MCF 10A (cell line): ENCODE measurements at regions of chr5 and their contacts with region 1.

Region 1: GRCh38 chr5:142769741-142770631 is at the start of gene ARHGAP26:
- DNase-seq: peak; percentile 99
- H3K4me3 Mint-ChIP-seq: peak within 1 kb of the TSS; percentile 95
- H3K27ac Mint-ChIP-seq: peak within 1 kb of the TSS; percentile 33
- H3K4me1 Mint-ChIP-seq: peaks cover 21% of the 10 kb centered on the region
- H3K27me3 Mint-ChIP-seq: no peaks in the 10 kb centered on the region
- CTCF ChIP-seq: peak; percentile 30
- total RNA-seq, gene ARHGAP26: 54.3 and 58.9 TPM in 2 replicates

Region 2: DNA sequence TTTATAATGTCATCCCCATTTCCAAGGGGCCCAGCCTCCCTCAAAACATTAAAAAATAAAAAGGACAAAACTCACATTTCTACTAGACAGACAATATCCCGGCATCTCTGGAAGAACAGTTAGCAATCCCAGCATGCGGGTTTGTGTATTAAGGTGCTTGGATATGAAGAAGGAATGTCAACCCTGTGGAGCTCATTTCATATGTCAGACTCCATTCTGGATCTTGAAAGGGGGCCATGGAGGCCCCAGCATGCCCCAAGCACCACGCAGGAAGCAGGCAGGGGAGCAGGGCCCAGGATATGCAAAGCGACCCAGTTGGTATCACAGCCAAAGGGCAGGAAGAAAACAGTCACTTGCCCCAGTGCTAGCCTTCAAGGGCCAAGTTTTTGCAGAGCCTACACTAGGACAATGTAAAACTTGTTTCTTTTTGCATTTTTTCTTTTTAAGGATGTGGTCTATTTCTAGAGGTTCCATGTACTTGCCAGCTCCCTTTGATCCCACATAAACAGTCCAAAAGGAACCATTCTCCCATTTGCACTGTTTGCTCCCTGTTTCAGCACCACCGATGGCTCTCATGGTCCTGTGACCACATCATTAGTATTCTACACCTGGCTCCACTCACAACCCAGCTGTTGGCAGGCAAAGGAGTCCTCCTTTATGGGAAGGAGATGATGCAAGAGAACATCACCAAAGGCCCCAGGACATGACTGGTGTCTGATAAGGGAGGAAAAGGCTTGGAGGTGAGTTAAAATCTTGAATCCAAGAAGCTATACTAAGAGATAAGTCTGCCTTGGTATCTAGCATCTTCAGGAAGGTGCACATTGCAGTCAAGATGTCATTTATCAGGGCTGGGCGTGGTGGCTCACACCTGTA is 142.4 kb before region 1 on chr5:
- CTCF ChIA-PET with region 1: no interaction called
- POLR2A ChIA-PET with region 1: no interaction called
- intact Hi-C with region 1: no loop called
- DNase-seq: peak; percentile 42
- H3K4me3 Mint-ChIP-seq: no peak overlapping the region
- H3K27ac Mint-ChIP-seq: no peak overlapping the region
- H3K4me1 Mint-ChIP-seq: no peaks in the 10 kb centered on the region
- H3K27me3 Mint-ChIP-seq: no peaks in the 10 kb centered on the region
- CTCF ChIP-seq: no peak

Region 3: GRCh38 chr5:142692321-142692894 is 77.6 kb before region 1 on chr5:
- CTCF ChIA-PET with region 1: no interaction called
- POLR2A ChIA-PET with region 1: no interaction called
- intact Hi-C with region 1: no loop called
- DNase-seq: no peak
- H3K4me3 Mint-ChIP-seq: no peak overlapping the region
- H3K27ac Mint-ChIP-seq: no peak overlapping the region
- H3K4me1 Mint-ChIP-seq: peaks cover 13% of the 10 kb centered on the region
- H3K27me3 Mint-ChIP-seq: no peaks in the 10 kb centered on the region
- CTCF ChIP-seq: no peak

Region 4: DNA sequence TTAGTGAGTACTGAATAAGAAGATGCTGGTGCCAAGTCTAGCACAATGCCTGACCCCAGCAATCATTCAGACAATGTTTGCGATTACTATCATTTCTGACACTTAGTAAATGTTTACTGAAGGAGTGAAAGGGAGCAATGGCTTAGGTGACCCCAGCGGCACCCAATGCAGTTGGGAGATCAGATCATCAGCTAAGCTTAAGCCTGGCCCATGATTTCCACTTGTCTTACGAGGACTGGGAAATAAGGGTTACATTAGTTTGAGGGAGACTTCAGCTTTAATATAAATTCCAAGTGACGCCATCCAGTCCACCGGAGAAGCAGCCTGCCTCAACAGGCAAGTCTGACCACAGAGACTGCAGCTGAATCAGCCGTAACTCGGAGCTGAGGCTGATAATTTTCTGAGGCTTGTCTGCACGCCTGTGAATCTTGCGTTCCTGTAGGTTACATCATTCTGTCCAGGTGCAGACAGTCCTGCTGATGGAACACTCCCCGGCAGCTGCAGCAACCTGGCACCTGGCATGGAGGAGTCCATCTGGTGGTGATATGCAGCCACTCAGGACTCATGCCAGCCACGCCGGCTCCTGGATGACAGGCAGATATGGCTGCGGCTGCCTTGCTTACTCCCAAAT is 49.2 kb before region 1 on chr5:
- CTCF ChIA-PET with region 1: interaction called, 143 read pairs
- POLR2A ChIA-PET with region 1: interaction called, 58 read pairs
- intact Hi-C with region 1: loop called (anchors 1 kb)
- DNase-seq: peak; percentile 95
- H3K4me3 Mint-ChIP-seq: peak overlapping the region; percentile 27
- H3K27ac Mint-ChIP-seq: peak overlapping the region; percentile 74
- H3K4me1 Mint-ChIP-seq: peaks cover 46% of the 10 kb centered on the region
- H3K27me3 Mint-ChIP-seq: no peaks in the 10 kb centered on the region
- CTCF ChIP-seq: peak; percentile 24

Region 5: GRCh38 chr5:142748568-142749249 is 21.3 kb before region 1 on chr5:
- CTCF ChIA-PET with region 1: interaction called, 33 read pairs
- POLR2A ChIA-PET with region 1: interaction called, 32 read pairs
- intact Hi-C with region 1: loop called (anchors 1 kb)
- DNase-seq: peak; percentile 84
- H3K4me3 Mint-ChIP-seq: no peak overlapping the region
- H3K27ac Mint-ChIP-seq: peak overlapping the region; percentile 20
- H3K4me1 Mint-ChIP-seq: peaks cover 44% of the 10 kb centered on the region
- H3K27me3 Mint-ChIP-seq: no peaks in the 10 kb centered on the region
- CTCF ChIP-seq: peak; percentile 87

Region 6: GRCh38 chr5:142821733-142822487 is 51.9 kb after region 1 on chr5:
- CTCF ChIA-PET with region 1: interaction called, 8 read pairs
- POLR2A ChIA-PET with region 1: interaction called, 14 read pairs
- intact Hi-C with region 1: loop called (anchors 1 kb)
- DNase-seq: peak; percentile 87
- H3K4me3 Mint-ChIP-seq: no peak overlapping the region
- H3K27ac Mint-ChIP-seq: no peak overlapping the region
- H3K4me1 Mint-ChIP-seq: peaks cover 41% of the 10 kb centered on the region
- H3K27me3 Mint-ChIP-seq: no peaks in the 10 kb centered on the region
- CTCF ChIP-seq: no peak

Region 7: GRCh38 chr5:142860270-142860669 is 90.3 kb after region 1 on chr5:
- CTCF ChIA-PET with region 1: interaction called, 21 read pairs
- POLR2A ChIA-PET with region 1: interaction called, 9 read pairs
- intact Hi-C with region 1: no loop called
- DNase-seq: no peak
- H3K4me3 Mint-ChIP-seq: no peak overlapping the region
- H3K27ac Mint-ChIP-seq: no peak overlapping the region
- H3K4me1 Mint-ChIP-seq: peaks cover 22% of the 10 kb centered on the region
- H3K27me3 Mint-ChIP-seq: no peaks in the 10 kb centered on the region
- CTCF ChIP-seq: no peak

Region 8: GRCh38 chr5:142888469-142889085 is 118.6 kb after region 1 on chr5:
- CTCF ChIA-PET with region 1: interaction called, 66 read pairs
- POLR2A ChIA-PET with region 1: no interaction called
- intact Hi-C with region 1: no loop called
- DNase-seq: peak; percentile 83
- H3K4me3 Mint-ChIP-seq: no peak overlapping the region
- H3K27ac Mint-ChIP-seq: no peak overlapping the region
- H3K4me1 Mint-ChIP-seq: no peaks in the 10 kb centered on the region
- H3K27me3 Mint-ChIP-seq: no peaks in the 10 kb centered on the region
- CTCF ChIP-seq: peak; percentile 89